Endothelial cell of umbilical vein (primary cell): ENCODE measurements at regions of chr17 and their contacts with region 1.

Region 1: DNA sequence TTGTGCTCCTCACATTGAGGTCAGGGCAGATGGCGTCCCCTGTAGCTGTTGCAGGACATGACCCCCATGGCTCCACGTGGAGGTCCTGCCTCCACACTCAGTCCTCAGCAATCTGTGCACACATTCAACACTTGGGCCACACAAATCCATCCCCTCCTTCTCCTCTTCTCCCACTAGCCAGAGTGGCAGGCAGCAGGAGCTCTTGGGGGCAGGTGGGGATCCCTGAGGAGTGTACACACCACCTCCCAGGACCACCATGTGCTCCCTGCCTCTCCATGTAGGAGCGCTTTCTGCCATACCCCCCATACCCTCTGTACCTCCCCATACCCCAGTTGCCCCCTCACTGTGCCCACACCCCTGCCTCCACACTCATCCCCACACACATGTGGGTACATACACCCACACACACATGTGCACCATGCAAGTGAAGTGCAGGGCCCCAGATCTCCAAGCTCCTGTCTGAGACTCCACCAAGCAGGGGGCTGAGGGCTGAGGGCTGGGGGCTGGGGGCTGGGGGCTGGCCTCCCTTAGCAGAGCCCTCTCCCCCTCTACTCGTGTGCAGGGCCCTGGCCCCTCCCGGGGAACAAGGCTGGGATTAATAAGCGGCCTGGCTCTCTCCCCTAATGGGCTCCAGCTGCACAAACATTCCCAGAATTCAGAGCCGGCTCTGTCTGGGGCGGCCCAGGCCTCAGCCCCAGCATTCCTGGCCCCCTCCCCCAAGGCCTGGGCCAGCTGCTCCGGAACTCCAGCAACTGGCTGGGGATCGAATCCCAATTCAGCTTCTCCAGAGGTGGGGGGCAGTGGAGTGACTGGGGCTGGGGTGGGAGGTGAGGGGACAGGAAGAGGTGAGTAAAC is 48.2 kb upstream of the MEIOC start:
- DNase-seq: peak; percentile 39
- H3K4me3 ChIP-seq: no peak overlapping the region
- H3K27ac ChIP-seq: no peak overlapping the region
- H3K4me1 ChIP-seq: no peaks in the 10 kb centered on the region
- H3K27me3 ChIP-seq: no peaks in the 10 kb centered on the region
- CTCF ChIP-seq: no peak
- POLR2A ChIP-seq: no peak

Region 2: GRCh38 chr17:44623070-44623725 is 15.1 kb after region 1 on chr17:
- CTCF ChIA-PET with region 1: interaction called, 18 read pairs
- POLR2A ChIA-PET with region 1: no interaction called
- dilution Hi-C with region 1: no loop called
- intact Hi-C with region 1: no loop called
- DNase-seq: no peak
- H3K4me3 ChIP-seq: no peak overlapping the region
- H3K27ac ChIP-seq: no peak overlapping the region
- H3K4me1 ChIP-seq: no peaks in the 10 kb centered on the region
- H3K27me3 ChIP-seq: no peaks in the 10 kb centered on the region
- CTCF ChIP-seq: no peak
- POLR2A ChIP-seq: no peak

Region 3: GRCh38 chr17:44651228-44651627 is 43.2 kb after region 1 on chr17:
- CTCF ChIA-PET with region 1: no interaction called
- POLR2A ChIA-PET with region 1: no interaction called
- dilution Hi-C with region 1: no loop called
- intact Hi-C with region 1: no loop called
- DNase-seq: no peak
- H3K4me3 ChIP-seq: no peak overlapping the region
- H3K27ac ChIP-seq: no peak overlapping the region
- H3K4me1 ChIP-seq: no peaks in the 10 kb centered on the region
- H3K27me3 ChIP-seq: peaks cover 20 to 24% of the 10 kb centered on the region in 2 experiments
- CTCF ChIP-seq: no peak
- POLR2A ChIP-seq: no peak